Activated CD4-positive, alpha-beta T cell treated with anti-CD3 and anti-CD28 coated beads for 36 hours (primary cell): ENCODE measurements at regions of chr17 and their contacts with region 1.

Region 1: GRCh38 chr17:42153919-42154742 is 658 bp downstream of the RAB5C start:
- DNase-seq: no peak
- ATAC-seq: no peak
- H3K4me3 Mint-ChIP-seq: peak overlapping the region; percentile 97
- H3K27ac Mint-ChIP-seq: peak overlapping the region; percentile 93
- H3K4me1 Mint-ChIP-seq: peaks cover 31% of the 10 kb centered on the region
- H3K27me3 Mint-ChIP-seq: no peaks in the 10 kb centered on the region

Region 2: DNA sequence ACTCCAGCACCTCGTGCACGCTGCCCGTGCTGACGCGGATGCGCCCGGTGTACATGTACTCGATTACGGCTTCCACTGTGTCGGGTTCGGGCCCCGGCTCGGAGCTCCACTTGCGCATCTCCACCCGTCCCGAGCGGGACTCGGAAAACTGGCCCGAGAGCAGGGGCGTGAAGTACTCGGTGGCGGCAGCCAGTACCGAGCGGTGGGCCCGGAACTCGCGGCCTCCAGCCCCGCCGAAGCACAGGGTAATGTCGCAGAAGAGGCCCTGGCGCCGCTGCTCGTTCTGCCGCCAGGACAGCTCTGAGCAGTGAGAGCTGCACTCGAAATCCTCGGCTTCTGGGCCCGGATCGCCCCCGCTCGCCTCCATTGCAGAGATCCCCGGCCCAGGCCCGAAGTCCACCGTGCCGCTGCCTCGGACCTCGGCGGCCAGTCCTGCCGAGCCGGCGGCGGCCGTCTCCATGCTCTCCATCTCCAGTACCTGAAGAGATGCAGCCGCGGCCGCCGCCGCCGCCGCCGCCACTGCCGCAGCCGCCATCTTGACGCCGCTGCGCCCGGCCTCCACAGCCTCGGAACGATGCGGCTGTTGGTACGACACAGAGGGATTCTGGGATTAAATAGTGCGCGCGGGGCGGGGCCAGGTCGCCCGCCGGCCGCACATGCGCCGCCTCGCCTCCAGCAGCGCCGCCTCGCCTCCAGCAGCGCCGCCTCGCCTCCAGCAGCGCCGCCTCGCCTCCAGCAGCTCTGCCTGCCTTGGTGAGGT is 289.1 kb before region 1 on chr17 and contains the start of gene KLHL11:
- CTCF ChIA-PET with region 1: no interaction called
- POLR2A ChIA-PET with region 1: no interaction called
- intact Hi-C with region 1: loop called in 1 of 2 experiments (anchors 1 kb)
- DNase-seq: peak; percentile 94
- ATAC-seq: peak; percentile 88
- H3K4me3 Mint-ChIP-seq: no peak within 1 kb of the TSS
- H3K27ac Mint-ChIP-seq: peak within 1 kb of the TSS; percentile 68
- H3K4me1 Mint-ChIP-seq: peaks cover 49% of the 10 kb centered on the region
- H3K27me3 Mint-ChIP-seq: no peaks in the 10 kb centered on the region
- total RNA-seq, gene KLHL11: 16.4 to 18.0 TPM

Region 3: DNA sequence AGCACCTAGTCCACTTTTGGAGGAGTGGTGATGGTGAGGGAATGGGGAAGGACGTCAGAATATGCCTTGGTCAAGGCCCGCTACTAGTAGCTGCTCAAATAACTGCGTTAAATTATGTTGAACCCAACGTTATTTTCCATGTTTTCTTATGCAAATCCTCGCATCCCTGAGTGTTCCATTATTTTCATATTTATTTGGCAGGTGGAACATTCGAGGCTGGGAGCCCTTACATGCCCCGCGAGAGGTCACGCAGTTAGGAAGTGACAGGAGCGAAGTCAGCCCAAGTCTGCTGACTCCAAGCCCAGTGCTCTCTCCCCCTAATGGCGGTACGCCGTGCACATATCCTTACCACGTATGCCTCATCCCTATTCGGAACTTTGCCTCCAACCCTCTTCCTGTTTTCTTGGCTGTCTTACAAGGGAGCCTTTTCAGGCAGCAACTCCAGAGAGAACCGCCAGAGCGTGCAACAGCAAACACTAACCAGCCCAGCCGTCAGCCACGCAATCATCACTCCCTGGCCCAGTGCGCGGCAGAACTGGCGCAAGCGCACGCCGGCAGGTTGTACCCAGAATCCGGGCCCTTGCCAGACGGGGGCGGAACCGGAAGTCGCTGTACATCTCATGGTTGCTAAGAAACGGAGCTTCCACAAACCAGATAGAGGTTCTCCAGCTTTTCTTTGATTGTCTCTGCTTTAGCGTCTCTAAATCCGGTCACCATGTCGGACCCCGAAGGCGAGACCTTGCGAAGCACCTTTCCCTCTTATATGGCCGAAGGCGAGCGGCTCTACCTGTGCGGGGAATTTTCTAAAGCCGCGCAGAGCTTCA is 223.9 kb before region 1 on chr17 and contains the start of gene ODAD4:
- CTCF ChIA-PET with region 1: interaction called, 4 read pairs
- POLR2A ChIA-PET with region 1: no interaction called
- intact Hi-C with region 1: loop called in 1 of 2 experiments (anchors 1 kb)
- DNase-seq: peak; percentile 98
- ATAC-seq: peak; percentile 99
- H3K4me3 Mint-ChIP-seq: peak within 1 kb of the TSS; percentile 96
- H3K27ac Mint-ChIP-seq: peak within 1 kb of the TSS; percentile 98
- H3K4me1 Mint-ChIP-seq: peaks cover 21% of the 10 kb centered on the region
- H3K27me3 Mint-ChIP-seq: no peaks in the 10 kb centered on the region
- total RNA-seq, gene ODAD4: 0.81 to 1.1 TPM

Region 4: GRCh38 chr17:42112552-42113176 is 41.5 kb before region 1 on chr17 and contains the start of gene DHX58:
- CTCF ChIA-PET with region 1: no interaction called
- POLR2A ChIA-PET with region 1: no interaction called
- intact Hi-C with region 1: loop called (anchors 1 to 2 kb)
- DNase-seq: peak; percentile 89
- ATAC-seq: peak; percentile 86
- H3K4me3 Mint-ChIP-seq: peak within 1 kb of the TSS; percentile 77
- H3K27ac Mint-ChIP-seq: peak within 1 kb of the TSS; percentile 97
- H3K4me1 Mint-ChIP-seq: peaks cover 35% of the 10 kb centered on the region
- H3K27me3 Mint-ChIP-seq: no peaks in the 10 kb centered on the region
- total RNA-seq, gene DHX58: 23.8 to 31.1 TPM

Region 5: GRCh38 chr17:42120770-42121769 is 33.1 kb before region 1 on chr17 and contains the start of gene KAT2A:
- CTCF ChIA-PET with region 1: no interaction called
- POLR2A ChIA-PET with region 1: no interaction called
- intact Hi-C with region 1: loop called in 1 of 2 experiments (anchors 1 kb)
- DNase-seq: peak; percentile 90
- ATAC-seq: peak; percentile 93
- H3K4me3 Mint-ChIP-seq: peak within 1 kb of the TSS; percentile 70
- H3K27ac Mint-ChIP-seq: peak within 1 kb of the TSS; percentile 76
- H3K4me1 Mint-ChIP-seq: peaks cover 29% of the 10 kb centered on the region
- H3K27me3 Mint-ChIP-seq: no peaks in the 10 kb centered on the region
- total RNA-seq, gene KAT2A: 46.2 to 54.8 TPM

Region 6: DNA sequence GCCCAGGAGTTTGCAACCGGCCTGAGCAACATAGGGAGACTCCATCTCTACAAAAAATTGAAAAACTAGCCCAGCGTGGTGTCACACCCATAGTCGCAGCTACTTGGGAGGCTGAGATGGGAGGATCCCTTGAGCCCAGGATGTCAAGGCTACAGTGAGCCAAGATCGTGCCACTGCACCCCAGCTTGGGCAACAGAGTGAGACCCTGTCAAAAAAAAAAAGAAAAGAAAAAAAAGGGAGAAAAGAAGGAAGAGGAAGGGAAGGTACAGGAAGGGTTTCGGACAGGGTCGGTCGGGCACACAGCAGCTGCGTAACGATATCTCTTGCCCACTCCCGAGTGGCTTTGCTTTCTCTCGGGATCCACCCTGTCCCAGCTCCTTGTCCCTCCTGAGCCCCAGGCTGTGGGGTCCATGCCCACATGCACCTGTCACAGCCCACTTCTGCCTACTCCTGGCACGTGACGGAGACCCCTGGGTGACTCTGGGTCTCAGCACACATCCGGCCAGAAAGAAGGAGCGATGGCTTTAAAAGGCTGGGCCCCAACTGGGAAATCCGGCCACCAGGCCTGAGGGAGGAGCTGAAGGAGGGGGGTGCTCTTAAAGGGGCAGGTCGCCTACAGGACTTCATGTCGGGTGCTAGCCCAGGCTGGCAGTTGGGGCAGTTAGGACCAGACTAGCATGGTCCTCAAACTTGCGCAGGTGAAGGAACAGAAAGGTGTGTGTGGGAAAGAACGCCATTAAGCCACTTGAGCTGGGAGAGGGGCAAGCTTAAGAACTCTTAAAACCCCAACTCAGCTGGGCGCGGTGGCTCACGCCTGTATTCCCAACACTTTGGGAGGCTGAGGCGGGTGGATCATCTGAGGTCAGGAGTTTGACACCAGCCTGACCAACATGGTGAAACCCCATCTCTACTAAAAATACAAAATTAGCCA is 40.1 kb after region 1 on chr17 and contains the start of gene GHDC:
- CTCF ChIA-PET with region 1: interaction called, 7 read pairs
- POLR2A ChIA-PET with region 1: interaction called, 3 read pairs
- intact Hi-C with region 1: loop called in 1 of 2 experiments (anchors 1 kb)
- DNase-seq: peak; percentile 88
- ATAC-seq: peak; percentile 98
- H3K4me3 Mint-ChIP-seq: peak within 1 kb of the TSS; percentile 91
- H3K27ac Mint-ChIP-seq: peak within 1 kb of the TSS; percentile 94
- H3K4me1 Mint-ChIP-seq: peaks cover 15% of the 10 kb centered on the region
- H3K27me3 Mint-ChIP-seq: no peaks in the 10 kb centered on the region
- total RNA-seq, gene GHDC: 11.3 to 15.5 TPM

Region 7: DNA sequence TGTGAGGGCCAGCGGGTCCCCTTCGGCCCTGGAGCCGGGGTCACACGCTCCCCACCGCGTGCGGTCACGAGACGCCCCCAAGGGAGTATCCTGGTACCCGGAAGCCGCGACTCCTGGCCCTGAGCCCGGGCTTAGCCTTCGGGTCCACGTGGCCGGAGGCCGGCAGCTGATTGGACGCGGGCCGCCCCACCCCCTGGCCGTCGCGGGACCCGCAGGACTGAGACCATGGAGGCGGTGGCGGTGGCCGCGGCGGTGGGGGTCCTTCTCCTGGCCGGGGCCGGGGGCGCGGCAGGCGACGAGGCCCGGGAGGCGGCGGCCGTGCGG is 381.9 kb after region 1 on chr17 and contains the start of gene NAGLU:
- CTCF ChIA-PET with region 1: no interaction called
- POLR2A ChIA-PET with region 1: no interaction called
- intact Hi-C with region 1: loop called in 1 of 2 experiments (anchors 1 kb)
- DNase-seq: peak; percentile 92
- ATAC-seq: peak; percentile 87
- H3K4me3 Mint-ChIP-seq: peak within 1 kb of the TSS; percentile 86
- H3K27ac Mint-ChIP-seq: peak within 1 kb of the TSS; percentile 90
- H3K4me1 Mint-ChIP-seq: peaks cover 30% of the 10 kb centered on the region
- H3K27me3 Mint-ChIP-seq: no peaks in the 10 kb centered on the region
- total RNA-seq, gene NAGLU: 9.7 to 12.5 TPM